ENCODE measurements at regions of chr13 and their contacts with region 1.

Region 1: DNA sequence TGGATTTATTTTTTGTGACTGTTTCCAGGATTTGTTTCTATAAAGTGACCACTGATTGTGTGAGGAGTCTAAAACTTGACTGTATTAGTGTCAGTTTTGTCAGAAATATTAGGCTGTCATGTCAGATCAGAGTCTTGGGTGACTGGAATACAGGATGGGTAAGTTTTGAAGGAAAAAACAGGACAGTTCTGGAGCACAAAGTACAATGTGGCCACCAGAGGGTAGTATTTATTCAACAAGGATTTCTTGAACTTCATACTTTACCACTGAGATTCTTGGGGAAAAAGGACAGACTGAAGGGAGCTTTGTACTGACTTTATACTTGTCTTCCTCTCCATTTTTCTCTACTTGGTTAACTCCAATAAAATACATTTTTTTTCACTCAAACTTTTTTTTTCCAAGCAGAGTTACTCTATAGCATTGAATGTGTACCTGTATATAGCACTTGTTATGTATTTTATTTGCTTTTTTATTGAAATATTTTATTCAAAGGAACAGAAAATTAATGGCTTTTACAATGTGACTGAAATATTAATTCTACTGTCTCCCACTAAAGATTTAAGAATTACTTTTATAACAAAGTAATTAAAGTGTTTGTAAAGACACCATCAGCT is 51.1 kb downstream of the LMO7 start:
- DNase-seq: peak; percentile 10
- H3K4me3 ChIP-seq: no peak overlapping the region
- H3K27ac ChIP-seq: peak overlapping the region in 1 of 2 experiments; percentile 0; a peak in 1 of 4 replicates
- H3K4me1 ChIP-seq: peaks cover 0 to 13% of the 10 kb centered on the region in 2 experiments; a peak in 1 of 4 replicates
- H3K27me3 ChIP-seq: no peaks in the 10 kb centered on the region
- CTCF ChIP-seq: peak; percentile 72
- EP300 ChIP-seq: no peak
- RAD21 ChIP-seq: peak; percentile 65

Region 2: DNA sequence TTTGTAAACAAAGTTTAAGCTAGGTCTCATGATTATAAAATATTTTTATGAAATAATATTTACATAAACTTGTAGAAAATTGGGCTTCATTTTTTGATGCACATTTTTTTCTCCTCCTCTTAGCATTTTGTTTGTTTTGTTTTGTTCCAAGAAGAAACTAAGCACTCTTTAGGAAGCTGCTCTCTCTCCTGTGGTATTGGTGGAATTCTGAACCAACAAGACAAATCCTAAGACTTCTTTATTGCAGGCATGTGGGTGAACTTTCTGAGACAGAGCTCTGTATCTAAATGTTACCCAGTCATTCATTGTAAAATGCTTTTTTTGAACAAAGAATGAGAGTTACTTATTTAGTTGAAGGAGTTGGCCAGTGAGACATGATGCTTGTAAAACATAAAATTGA is 11.8 kb before region 1 on chr13:
- CTCF ChIA-PET with region 1: interaction called, 12 read pairs
- POLR2A ChIA-PET with region 1: no interaction called
- DNase-seq: no peak
- H3K4me3 ChIP-seq: no peak overlapping the region
- H3K27ac ChIP-seq: no peak overlapping the region; a peak in 1 of 4 replicates
- H3K4me1 ChIP-seq: peaks cover 3 to 20% of the 10 kb centered on the region in 2 experiments; a peak in 3 of 4 replicates
- H3K27me3 ChIP-seq: no peaks in the 10 kb centered on the region
- CTCF ChIP-seq: no peak
- EP300 ChIP-seq: no peak
- RAD21 ChIP-seq: no peak